ENCODE measurements at regions of chr4 and their contacts with region 1.

Region 1: DNA sequence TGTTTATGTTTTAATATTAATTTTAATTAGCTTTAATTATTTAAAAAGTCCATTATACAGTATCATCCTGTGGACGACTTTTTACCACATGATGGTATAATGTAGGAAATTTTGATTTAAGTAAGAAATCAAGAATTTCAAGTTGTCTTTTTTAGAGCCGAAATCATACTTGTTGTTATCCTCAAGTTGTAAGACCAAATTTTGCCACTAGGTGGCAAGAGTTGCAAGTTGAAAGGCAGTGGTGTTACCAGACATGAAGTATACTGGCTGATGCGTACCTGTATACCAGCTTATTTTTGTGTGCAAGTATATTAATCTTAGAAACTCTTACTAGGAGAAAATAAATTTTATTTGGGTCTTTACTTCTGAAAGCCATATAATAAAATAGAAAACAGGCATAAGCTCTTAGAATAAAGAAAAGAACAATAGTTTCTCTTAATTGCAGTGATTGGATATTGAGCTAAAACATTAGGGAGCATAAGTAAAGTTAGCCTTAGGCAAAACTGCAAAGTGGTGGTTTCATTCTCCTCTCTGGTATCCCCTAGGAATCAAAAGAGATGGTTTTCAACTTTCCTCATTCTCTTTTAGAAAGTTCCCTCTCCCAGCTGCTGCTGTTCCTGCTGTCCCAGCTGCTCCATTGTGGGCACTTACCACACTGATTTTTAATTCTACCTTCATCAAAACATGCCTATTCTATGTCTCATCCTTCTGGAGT is 118.0 kb upstream of the WDFY3 start:
- DNase-seq: peak; percentile 67
- H3K4me3 ChIP-seq: no peak overlapping the region
- H3K27ac ChIP-seq: no peak overlapping the region
- H3K4me1 ChIP-seq: no peaks in the 10 kb centered on the region
- H3K27me3 ChIP-seq: peaks cover 4 to 11% of the 10 kb centered on the region in 2 experiments
- CTCF ChIP-seq: peak; percentile 43 to 47
- POLR2A ChIP-seq: no peak

Region 2: GRCh38 chr4:85102606-85103005 is 18.1 kb after region 1 on chr4:
- CTCF ChIA-PET with region 1: interaction called, 13 read pairs
- POLR2A ChIA-PET with region 1: no interaction called
- dilution Hi-C with region 1: no loop called
- intact Hi-C with region 1: no loop called
- DNase-seq: no peak
- H3K4me3 ChIP-seq: no peak overlapping the region
- H3K27ac ChIP-seq: no peak overlapping the region
- H3K4me1 ChIP-seq: no peaks in the 10 kb centered on the region
- H3K27me3 ChIP-seq: peaks cover 4% of the 10 kb centered on the region in 2 experiments
- CTCF ChIP-seq: no peak
- POLR2A ChIP-seq: no peak